ENCODE measurements at regions of chr1 and their contacts with region 1.

Region 1: DNA sequence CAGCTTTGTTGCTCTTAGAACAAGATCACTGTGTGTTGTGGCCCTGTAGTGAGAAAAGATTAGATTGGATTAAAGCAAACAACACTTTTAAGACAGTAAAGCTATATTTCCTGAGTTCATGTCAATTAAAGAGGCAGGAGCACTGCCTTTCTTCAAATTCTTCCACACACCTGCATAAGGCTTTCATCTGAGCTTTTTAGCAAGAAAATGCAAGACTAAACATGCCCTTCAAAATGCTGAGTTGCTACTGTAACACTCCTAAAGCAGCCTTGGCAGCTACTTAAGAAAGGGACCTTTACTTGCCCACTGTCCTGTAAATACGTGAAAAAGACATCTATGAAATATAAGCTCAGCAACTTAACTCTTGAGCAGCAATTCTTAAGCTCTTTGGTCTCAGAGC is 11.8 kb downstream of the DPH5 start:
- DNase-seq: no peak
- H3K4me3 ChIP-seq: no peak overlapping the region
- H3K27ac ChIP-seq: no peak overlapping the region
- H3K4me1 ChIP-seq: no peaks in the 10 kb centered on the region
- H3K27me3 ChIP-seq: no peaks in the 10 kb centered on the region
- CTCF ChIP-seq: no peak
- POLR2A ChIP-seq: no peak

Region 2: GRCh38 chr1:101030881-101031280 is 17.1 kb after region 1 on chr1:
- CTCF ChIA-PET with region 1: no interaction called
- POLR2A ChIA-PET with region 1: no interaction called
- dilution Hi-C with region 1: no loop called
- intact Hi-C with region 1: loop called (anchors 2 kb)
- DNase-seq: no peak
- H3K4me3 ChIP-seq: no peak overlapping the region
- H3K27ac ChIP-seq: no peak overlapping the region
- H3K4me1 ChIP-seq: peaks cover 15% of the 10 kb centered on the region
- H3K27me3 ChIP-seq: no peaks in the 10 kb centered on the region
- CTCF ChIP-seq: no peak
- POLR2A ChIP-seq: no peak

Region 3: GRCh38 chr1:101474039-101474665 is 460.4 kb after region 1 on chr1:
- CTCF ChIA-PET with region 1: no interaction called
- POLR2A ChIA-PET with region 1: no interaction called
- dilution Hi-C with region 1: no loop called
- intact Hi-C with region 1: no loop called
- DNase-seq: peak; percentile 19
- H3K4me3 ChIP-seq: no peak overlapping the region
- H3K27ac ChIP-seq: no peak overlapping the region
- H3K4me1 ChIP-seq: no peaks in the 10 kb centered on the region
- H3K27me3 ChIP-seq: peaks cover 6 to 8% of the 10 kb centered on the region in 2 experiments
- CTCF ChIP-seq: peak; percentile 47 to 61
- POLR2A ChIP-seq: no peak

Measured in endothelial cell of umbilical vein (primary cell).